PC-9 (cell line): ENCODE measurements at regions of chr7 and their contacts with region 1.

Region 1: GRCh38 chr7:123797673-123798527 is 47.1 kb upstream of the HYAL4 start:
- DNase-seq: peak; percentile 45 to 99
- H3K4me3 ChIP-seq: peak overlapping the region; percentile 40; the same call in 1 of the 2 replicates
- H3K27ac ChIP-seq: peak overlapping the region; percentile 43
- H3K4me1 ChIP-seq: peaks cover 11% of the 10 kb centered on the region
- H3K27me3 ChIP-seq: no peaks in the 10 kb centered on the region
- CTCF ChIP-seq: peak; percentile 83

Region 2: GRCh38 chr7:123570401-123571182 is 227.3 kb before region 1 on chr7:
- CTCF ChIA-PET with region 1: no interaction called
- POLR2A ChIA-PET with region 1: no interaction called
- intact Hi-C with region 1: loop called (anchors 10 kb)
- DNase-seq: peak in 1 of 2 experiments; percentile 43
- H3K4me3 ChIP-seq: no peak overlapping the region
- H3K27ac ChIP-seq: no peak overlapping the region
- H3K4me1 ChIP-seq: no peaks in the 10 kb centered on the region; the same call in 1 of the 2 replicates
- H3K27me3 ChIP-seq: no peaks in the 10 kb centered on the region
- CTCF ChIP-seq: no peak

Region 3: GRCh38 chr7:123682690-123683089 is 115.2 kb before region 1 on chr7:
- CTCF ChIA-PET with region 1: interaction called, 5 read pairs
- POLR2A ChIA-PET with region 1: no interaction called
- intact Hi-C with region 1: loop called (anchors 2 kb)
- DNase-seq: peak; percentile 27 to 67
- H3K4me3 ChIP-seq: no peak overlapping the region
- H3K27ac ChIP-seq: no peak overlapping the region
- H3K4me1 ChIP-seq: no peaks in the 10 kb centered on the region
- H3K27me3 ChIP-seq: no peaks in the 10 kb centered on the region
- CTCF ChIP-seq: peak; percentile 73

Region 4: GRCh38 chr7:123846216-123846891 is 48.5 kb after region 1 on chr7:
- CTCF ChIA-PET with region 1: no interaction called
- POLR2A ChIA-PET with region 1: no interaction called
- intact Hi-C with region 1: loop called (anchors 1 kb)
- DNase-seq: peak; percentile 45 to 71
- H3K4me3 ChIP-seq: no peak overlapping the region
- H3K27ac ChIP-seq: peak overlapping the region; percentile 73
- H3K4me1 ChIP-seq: peaks cover 39% of the 10 kb centered on the region
- H3K27me3 ChIP-seq: no peaks in the 10 kb centered on the region
- CTCF ChIP-seq: no peak

Region 5: GRCh38 chr7:123871998-123872867 is 74.3 kb after region 1 on chr7:
- CTCF ChIA-PET with region 1: interaction called, 3 read pairs
- POLR2A ChIA-PET with region 1: no interaction called
- intact Hi-C with region 1: loop called (anchors 1 kb)
- DNase-seq: peak; percentile 38 to 40
- H3K4me3 ChIP-seq: no peak overlapping the region
- H3K27ac ChIP-seq: no peak overlapping the region
- H3K4me1 ChIP-seq: no peaks in the 10 kb centered on the region
- H3K27me3 ChIP-seq: no peaks in the 10 kb centered on the region
- CTCF ChIP-seq: peak; percentile 59

Region 6: GRCh38 chr7:124152859-124153692 is 355.2 kb after region 1 on chr7:
- CTCF ChIA-PET with region 1: no interaction called
- POLR2A ChIA-PET with region 1: no interaction called
- intact Hi-C with region 1: loop called (anchors 10 kb)
- DNase-seq: peak in 1 of 2 experiments; percentile 14
- H3K4me3 ChIP-seq: no peak overlapping the region
- H3K27ac ChIP-seq: no peak overlapping the region
- H3K4me1 ChIP-seq: no peaks in the 10 kb centered on the region
- H3K27me3 ChIP-seq: no peaks in the 10 kb centered on the region
- CTCF ChIP-seq: peak; percentile 53

Region 7: DNA sequence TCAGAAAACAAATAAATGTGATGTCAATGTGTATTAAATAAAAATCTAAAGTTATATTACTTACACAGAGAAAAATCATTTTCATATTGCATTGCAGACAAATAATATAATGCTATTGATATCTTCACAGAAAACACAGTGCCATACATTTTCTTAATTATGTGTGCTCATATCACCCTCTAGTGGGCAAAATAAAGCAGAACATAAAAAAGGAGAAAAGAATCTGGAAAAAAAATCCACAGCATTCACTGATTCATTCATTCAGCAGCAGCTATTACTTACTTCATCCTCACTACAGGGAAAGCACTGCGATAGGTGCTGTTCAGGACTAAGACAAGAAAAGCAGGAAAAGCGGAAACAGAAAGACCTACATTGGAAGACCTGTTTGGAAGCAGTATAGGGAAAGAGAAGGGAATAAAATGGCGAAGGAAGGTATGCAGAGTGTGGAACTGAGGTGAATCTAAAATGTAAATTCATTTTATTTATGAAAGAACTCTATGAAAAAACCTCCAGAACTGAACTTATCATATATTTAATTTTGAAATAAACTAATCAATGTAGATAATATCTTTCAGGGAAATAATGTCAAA is 1058.5 kb after region 1 on chr7:
- CTCF ChIA-PET with region 1: no interaction called
- POLR2A ChIA-PET with region 1: no interaction called
- intact Hi-C with region 1: loop called (anchors 1 kb)
- DNase-seq: peak; percentile 3 to 36
- H3K4me3 ChIP-seq: no peak overlapping the region
- H3K27ac ChIP-seq: no peak overlapping the region
- H3K4me1 ChIP-seq: no peaks in the 10 kb centered on the region
- H3K27me3 ChIP-seq: no peaks in the 10 kb centered on the region
- CTCF ChIP-seq: peak; percentile 77